ENCODE measurements at regions of chrX and their contacts with region 1.

Region 1: DNA sequence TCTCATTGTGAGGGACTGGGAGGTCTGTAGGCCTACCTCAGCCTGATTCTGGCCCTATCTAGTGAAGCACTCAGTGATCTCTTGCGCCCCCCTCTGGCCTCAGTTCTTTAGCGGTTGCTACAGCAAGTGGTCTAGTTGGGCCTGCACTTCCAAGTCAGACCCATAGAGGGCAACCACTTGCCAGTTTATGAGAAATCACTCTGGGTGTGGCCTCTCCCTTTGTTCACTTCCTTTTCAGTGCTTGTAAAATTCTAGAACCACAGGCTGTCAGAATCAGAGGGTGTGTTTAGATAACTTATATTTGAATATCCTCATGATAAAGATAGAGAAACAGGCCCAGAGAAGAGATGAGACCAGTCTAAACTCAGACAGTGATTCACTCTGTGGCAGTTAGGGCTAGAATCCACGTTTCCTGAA is 60.9 kb upstream of the LAS1L start:
- DNase-seq: peak; percentile 92
- H3K4me3 Mint-ChIP-seq: no peak overlapping the region
- H3K27ac Mint-ChIP-seq: no peak overlapping the region
- H3K4me1 Mint-ChIP-seq: peaks cover 13% of the 10 kb centered on the region
- H3K27me3 Mint-ChIP-seq: no peaks in the 10 kb centered on the region
- CTCF ChIP-seq: peak; percentile 96

Region 2: DNA sequence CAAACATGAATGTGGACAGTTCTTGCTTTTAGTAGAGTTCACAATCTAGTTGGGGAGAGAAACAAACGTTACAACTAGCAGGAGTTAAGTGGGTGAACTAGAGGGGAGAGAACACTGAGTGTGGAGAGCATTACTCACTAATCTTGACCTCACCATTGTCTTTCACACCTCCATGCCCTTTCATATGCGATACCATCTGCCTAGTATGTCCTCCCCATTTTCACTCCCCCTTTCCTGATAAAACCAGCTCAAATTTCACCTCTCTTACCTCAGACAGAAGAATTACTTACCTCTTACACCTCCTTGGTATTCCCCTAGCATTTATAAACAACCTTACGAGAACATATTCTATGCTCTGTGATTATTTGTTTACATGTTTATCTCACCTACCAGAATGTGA is 114.5 kb before region 1 on chrX:
- CTCF ChIA-PET with region 1: no interaction called
- POLR2A ChIA-PET with region 1: no interaction called
- intact Hi-C with region 1: no loop called
- DNase-seq: no peak
- H3K4me3 Mint-ChIP-seq: no peak overlapping the region
- H3K27ac Mint-ChIP-seq: no peak overlapping the region
- H3K4me1 Mint-ChIP-seq: no peaks in the 10 kb centered on the region
- H3K27me3 Mint-ChIP-seq: no peaks in the 10 kb centered on the region
- CTCF ChIP-seq: no peak

Region 3: GRCh38 chrX:65607070-65607742 is 11.7 kb after region 1 on chrX:
- CTCF ChIA-PET with region 1: interaction called, 11 read pairs
- POLR2A ChIA-PET with region 1: interaction called, 4 read pairs
- intact Hi-C with region 1: no loop called
- DNase-seq: peak; percentile 74
- H3K4me3 Mint-ChIP-seq: no peak overlapping the region
- H3K27ac Mint-ChIP-seq: no peak overlapping the region
- H3K4me1 Mint-ChIP-seq: peaks cover 14% of the 10 kb centered on the region
- H3K27me3 Mint-ChIP-seq: no peaks in the 10 kb centered on the region
- CTCF ChIP-seq: no peak

Region 4: GRCh38 chrX:65706041-65706828 is 110.8 kb after region 1 on chrX:
- CTCF ChIA-PET with region 1: interaction called, 40 read pairs
- POLR2A ChIA-PET with region 1: interaction called, 4 read pairs
- intact Hi-C with region 1: loop called (anchors 1 kb)
- DNase-seq: peak; percentile 90
- H3K4me3 Mint-ChIP-seq: no peak overlapping the region
- H3K27ac Mint-ChIP-seq: peak overlapping the region; percentile 82
- H3K4me1 Mint-ChIP-seq: peaks cover 36% of the 10 kb centered on the region
- H3K27me3 Mint-ChIP-seq: no peaks in the 10 kb centered on the region
- CTCF ChIP-seq: no peak

Region 5: DNA sequence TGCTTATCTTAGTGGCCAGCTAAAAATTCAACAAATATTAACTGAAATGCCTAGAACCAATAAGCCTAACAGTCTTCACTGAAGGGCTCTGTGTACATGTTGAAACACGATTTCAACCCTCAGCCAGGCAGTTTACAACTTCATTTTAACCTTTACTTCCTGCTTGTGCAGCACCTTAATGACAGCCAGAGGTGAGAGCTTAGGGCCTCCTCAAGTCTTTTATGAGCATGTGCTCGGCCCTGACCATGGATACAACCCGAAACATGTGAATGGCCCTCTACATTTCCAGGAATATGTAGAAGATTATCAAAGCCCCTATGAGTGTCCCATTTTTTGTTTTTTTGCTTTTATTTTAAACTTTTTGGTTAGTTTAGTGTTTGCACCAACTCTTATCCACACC is 160.3 kb after region 1 on chrX:
- CTCF ChIA-PET with region 1: no interaction called
- POLR2A ChIA-PET with region 1: no interaction called
- intact Hi-C with region 1: no loop called
- DNase-seq: peak; percentile 25
- H3K4me3 Mint-ChIP-seq: peak overlapping the region; percentile 36
- H3K27ac Mint-ChIP-seq: peak overlapping the region; percentile 89
- H3K4me1 Mint-ChIP-seq: peaks cover 21% of the 10 kb centered on the region
- H3K27me3 Mint-ChIP-seq: no peaks in the 10 kb centered on the region
- CTCF ChIP-seq: no peak